ENCODE measurements at regions of chr7 and their contacts with region 1.

Region 1: DNA sequence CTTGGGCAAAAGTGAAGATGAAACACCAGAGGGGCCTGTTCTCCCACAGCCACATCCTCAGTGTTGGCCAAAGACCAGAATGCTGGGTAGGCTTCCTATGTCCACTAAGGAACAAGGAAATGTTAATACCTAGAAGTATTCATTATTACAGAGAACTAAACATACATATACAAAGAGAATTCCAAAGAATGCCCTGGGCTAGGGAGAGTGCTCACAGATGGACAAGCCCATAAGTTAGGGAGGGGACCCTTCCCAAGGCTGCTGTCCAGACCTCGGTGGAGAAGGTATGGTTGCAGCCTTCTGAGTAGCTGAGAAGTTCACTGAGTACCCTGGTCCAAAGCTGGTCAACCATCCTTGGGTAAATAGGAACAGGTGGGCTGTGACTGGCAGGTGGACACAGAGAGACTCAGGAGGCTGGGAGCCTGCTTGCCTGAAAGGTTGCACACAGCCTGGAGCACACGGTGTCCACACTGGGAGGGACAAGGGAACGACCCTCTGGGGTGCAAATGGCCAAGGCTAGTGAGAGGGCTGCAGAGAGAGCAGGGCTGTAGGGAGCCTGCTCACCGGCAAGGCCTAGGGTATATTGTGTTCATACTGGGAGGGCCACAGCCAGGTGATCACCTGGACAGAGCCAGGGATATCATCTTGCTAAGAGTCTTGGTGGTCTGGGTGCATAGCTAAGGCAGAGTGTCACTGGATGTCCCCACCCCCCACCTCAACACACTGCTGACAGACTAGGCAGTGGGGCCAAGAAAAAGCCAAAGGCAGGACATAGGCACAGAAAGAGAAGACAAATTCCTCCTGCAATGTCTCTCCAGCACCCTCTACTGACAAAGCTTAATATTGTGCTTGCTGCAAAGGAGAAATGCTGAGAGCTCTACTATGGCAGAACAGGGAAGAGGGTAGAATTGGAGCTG is 40.3 kb downstream of the CPVL start:
- DNase-seq: peak; percentile 75
- H3K4me3 Mint-ChIP-seq: no peak overlapping the region
- H3K27ac Mint-ChIP-seq: no peak overlapping the region
- H3K4me1 Mint-ChIP-seq: peaks cover 37% of the 10 kb centered on the region
- H3K27me3 Mint-ChIP-seq: no peaks in the 10 kb centered on the region
- CTCF ChIP-seq: peak; percentile 86

Region 2: GRCh38 chr7:28955718-28956619 is 150.0 kb before region 1 on chr7:
- CTCF ChIA-PET with region 1: interaction called, 77 read pairs
- intact Hi-C with region 1: loop called (anchors 1 kb)
- DNase-seq: peak; percentile 93
- H3K4me3 Mint-ChIP-seq: peak overlapping the region; percentile 93
- H3K27ac Mint-ChIP-seq: peak overlapping the region; percentile 35
- H3K4me1 Mint-ChIP-seq: peaks cover 14% of the 10 kb centered on the region
- H3K27me3 Mint-ChIP-seq: no peaks in the 10 kb centered on the region
- CTCF ChIP-seq: peak; percentile 91

Region 3: GRCh38 chr7:29345600-29345999 is 239.6 kb after region 1 on chr7:
- CTCF ChIA-PET with region 1: interaction called, 14 read pairs
- intact Hi-C with region 1: no loop called
- DNase-seq: peak; percentile 81
- H3K4me3 Mint-ChIP-seq: no peak overlapping the region
- H3K27ac Mint-ChIP-seq: no peak overlapping the region
- H3K4me1 Mint-ChIP-seq: no peaks in the 10 kb centered on the region
- H3K27me3 Mint-ChIP-seq: no peaks in the 10 kb centered on the region
- CTCF ChIP-seq: no peak

Region 4: GRCh38 chr7:29408841-29409243 is 302.8 kb after region 1 on chr7:
- CTCF ChIA-PET with region 1: interaction called, 12 read pairs
- intact Hi-C with region 1: no loop called
- DNase-seq: peak; percentile 79
- H3K4me3 Mint-ChIP-seq: no peak overlapping the region
- H3K27ac Mint-ChIP-seq: no peak overlapping the region
- H3K4me1 Mint-ChIP-seq: peaks cover 13% of the 10 kb centered on the region
- H3K27me3 Mint-ChIP-seq: no peaks in the 10 kb centered on the region
- CTCF ChIP-seq: peak; percentile 89

Measured in Calu3 (cell line).